Activated naive CD4-positive, alpha-beta T cell treated with anti-CD3 and anti-CD28 coated beads for 36 hours (primary cell): ENCODE measurements at regions of chr17 and their contacts with region 1.

Region 1: GRCh38 chr17:35242805-35243560 is at the start of gene SLFN5:
- DNase-seq: peak; percentile 95
- H3K4me3 Mint-ChIP-seq: peak within 1 kb of the TSS; percentile 87
- H3K27ac Mint-ChIP-seq: peak within 1 kb of the TSS; percentile 97
- H3K4me1 Mint-ChIP-seq: peaks cover 65% of the 10 kb centered on the region
- H3K27me3 Mint-ChIP-seq: no peaks in the 10 kb centered on the region
- total RNA-seq, gene SLFN5: 34.1 to 35.0 TPM

Region 2: DNA sequence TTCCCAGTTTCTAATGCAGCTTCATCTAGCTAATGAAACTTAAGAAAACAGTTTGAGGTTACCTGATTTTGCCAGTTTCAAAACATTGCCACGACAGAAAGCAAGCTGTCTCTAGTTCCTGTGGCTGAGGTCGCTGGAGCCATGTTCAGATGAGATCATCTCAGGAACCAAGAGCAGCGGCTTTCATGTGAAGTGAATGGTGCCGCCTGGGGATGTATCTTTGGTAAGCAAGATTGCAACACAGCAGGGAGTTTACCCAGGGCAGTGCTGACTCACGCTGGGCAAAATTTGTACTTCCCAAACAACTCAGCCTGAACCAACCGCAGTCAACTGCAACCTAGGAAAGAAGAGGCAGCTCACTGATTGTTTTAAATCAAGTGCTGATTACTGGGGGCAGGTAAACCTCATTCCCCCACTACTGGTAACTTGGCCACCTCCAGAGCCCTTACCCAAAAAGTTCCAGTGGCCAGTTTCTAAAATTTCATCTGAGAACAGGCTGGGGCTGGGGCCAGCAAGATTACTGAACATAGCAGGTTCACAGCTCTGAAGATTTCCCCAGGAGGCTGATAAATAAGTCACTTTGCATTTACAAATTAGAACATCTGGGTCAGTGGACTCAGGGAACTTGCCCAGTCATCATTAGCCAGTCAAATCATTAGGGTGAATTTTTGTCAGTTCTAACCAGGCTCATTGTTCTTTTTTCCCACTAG is 179.3 kb before region 1 on chr17 and contains the start of gene RFFL:
- CTCF ChIA-PET with region 1: no interaction called
- intact Hi-C with region 1: loop called (anchors 1 kb)
- DNase-seq: peak; percentile 97
- H3K4me3 Mint-ChIP-seq: peak within 1 kb of the TSS; percentile 23
- H3K27ac Mint-ChIP-seq: peak within 1 kb of the TSS; percentile 65
- H3K4me1 Mint-ChIP-seq: peaks cover 57% of the 10 kb centered on the region
- H3K27me3 Mint-ChIP-seq: no peaks in the 10 kb centered on the region
- total RNA-seq, gene RFFL: 17.8 to 18.2 TPM

Region 3: DNA sequence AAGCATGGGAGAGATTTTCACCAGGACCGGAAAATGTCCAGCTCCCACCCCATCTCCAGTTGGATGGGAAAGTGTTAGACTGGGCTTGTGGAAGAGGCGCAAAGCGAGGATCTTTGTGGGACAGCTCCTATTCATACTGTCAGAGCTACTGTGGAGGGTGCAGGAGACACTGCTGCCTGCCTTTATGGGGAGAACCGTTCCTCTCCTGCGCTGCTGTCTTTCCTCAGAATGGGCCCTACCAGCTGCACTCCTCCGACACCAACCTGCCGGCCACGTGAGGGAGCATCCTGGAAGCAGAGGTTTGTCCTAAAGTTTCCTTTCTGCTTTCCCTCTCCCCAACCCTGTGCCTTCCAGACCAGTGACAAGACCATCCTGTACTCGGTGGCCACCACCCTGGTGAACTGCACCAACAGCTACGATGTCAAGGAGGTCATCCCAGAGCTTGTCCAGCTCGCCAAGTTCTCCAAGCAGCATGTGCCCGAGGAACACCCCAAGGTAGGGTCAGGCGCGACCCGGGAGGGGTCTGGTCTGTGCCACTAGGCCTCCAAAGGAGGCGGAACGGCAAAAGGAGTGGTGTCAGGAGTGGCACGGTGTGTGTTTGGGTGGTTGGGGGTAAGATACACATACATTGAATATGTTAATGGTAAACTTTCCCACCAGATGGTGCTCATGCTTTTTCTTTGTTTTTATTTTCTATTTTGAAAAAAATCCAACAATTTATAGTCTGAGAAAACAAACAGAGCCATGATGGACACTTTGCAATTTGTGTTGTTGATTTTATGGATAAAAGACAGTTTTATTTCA is 71.8 kb before region 1 on chr17:
- CTCF ChIA-PET with region 1: interaction called, 4 read pairs
- intact Hi-C with region 1: loop called (anchors 1 kb)
- DNase-seq: no peak
- H3K4me3 Mint-ChIP-seq: no peak overlapping the region
- H3K27ac Mint-ChIP-seq: peak overlapping the region; percentile 61
- H3K4me1 Mint-ChIP-seq: peaks cover 33% of the 10 kb centered on the region
- H3K27me3 Mint-ChIP-seq: no peaks in the 10 kb centered on the region

Region 4: GRCh38 chr17:35299129-35299528 is 56.1 kb after region 1 on chr17:
- CTCF ChIA-PET with region 1: no interaction called
- intact Hi-C with region 1: no loop called
- DNase-seq: no peak
- H3K4me3 Mint-ChIP-seq: no peak overlapping the region
- H3K27ac Mint-ChIP-seq: no peak overlapping the region
- H3K4me1 Mint-ChIP-seq: no peaks in the 10 kb centered on the region
- H3K27me3 Mint-ChIP-seq: no peaks in the 10 kb centered on the region

Region 5: GRCh38 chr17:35312790-35313711 is 70.1 kb after region 1 on chr17:
- CTCF ChIA-PET with region 1: interaction called, 5 read pairs
- intact Hi-C with region 1: loop called (anchors 2 kb)
- DNase-seq: peak; percentile 78
- H3K4me3 Mint-ChIP-seq: peak overlapping the region; percentile 77
- H3K27ac Mint-ChIP-seq: peak overlapping the region; percentile 85
- H3K4me1 Mint-ChIP-seq: peaks cover 27% of the 10 kb centered on the region
- H3K27me3 Mint-ChIP-seq: no peaks in the 10 kb centered on the region

Region 6: DNA sequence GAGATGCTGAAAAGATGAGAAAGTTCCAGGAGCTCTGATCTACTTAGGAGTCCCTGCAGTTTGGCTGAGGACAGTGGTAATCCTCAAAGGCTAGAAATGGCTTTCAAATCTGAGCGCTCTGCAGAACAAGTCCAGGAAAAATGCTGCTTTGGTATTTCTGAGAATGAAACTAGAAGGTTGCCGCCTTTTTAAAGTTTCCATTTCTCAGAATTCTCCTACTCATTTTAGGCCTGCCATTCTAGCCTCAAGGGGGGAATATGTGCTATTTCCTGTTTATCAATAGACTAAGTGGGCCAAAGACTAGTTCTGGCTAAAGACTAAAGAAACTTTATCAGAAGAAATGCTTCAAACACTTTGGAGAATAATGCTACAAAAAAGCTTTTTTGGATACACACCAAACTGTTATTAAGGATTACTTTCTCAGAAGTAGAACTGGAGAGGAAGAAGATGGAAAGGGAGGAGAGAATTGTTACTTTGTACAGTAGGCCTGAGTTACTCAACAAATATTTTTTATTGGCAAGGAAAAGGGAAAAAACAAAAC is 294.7 kb after region 1 on chr17 and contains the start of gene SLFN12L:
- CTCF ChIA-PET with region 1: interaction called, 5 read pairs
- intact Hi-C with region 1: loop called (anchors 1 kb)
- DNase-seq: peak; percentile 54
- H3K4me3 Mint-ChIP-seq: peak within 1 kb of the TSS; percentile 92
- H3K27ac Mint-ChIP-seq: peak within 1 kb of the TSS; percentile 98
- H3K4me1 Mint-ChIP-seq: peaks cover 47% of the 10 kb centered on the region
- H3K27me3 Mint-ChIP-seq: no peaks in the 10 kb centered on the region
- total RNA-seq, gene SLFN12L: 23.5 to 25.2 TPM